Mucosa of descending colon (tissue), 3 donors: ENCODE measurements at regions of chr1 and their contacts with region 1.

Region 1: DNA sequence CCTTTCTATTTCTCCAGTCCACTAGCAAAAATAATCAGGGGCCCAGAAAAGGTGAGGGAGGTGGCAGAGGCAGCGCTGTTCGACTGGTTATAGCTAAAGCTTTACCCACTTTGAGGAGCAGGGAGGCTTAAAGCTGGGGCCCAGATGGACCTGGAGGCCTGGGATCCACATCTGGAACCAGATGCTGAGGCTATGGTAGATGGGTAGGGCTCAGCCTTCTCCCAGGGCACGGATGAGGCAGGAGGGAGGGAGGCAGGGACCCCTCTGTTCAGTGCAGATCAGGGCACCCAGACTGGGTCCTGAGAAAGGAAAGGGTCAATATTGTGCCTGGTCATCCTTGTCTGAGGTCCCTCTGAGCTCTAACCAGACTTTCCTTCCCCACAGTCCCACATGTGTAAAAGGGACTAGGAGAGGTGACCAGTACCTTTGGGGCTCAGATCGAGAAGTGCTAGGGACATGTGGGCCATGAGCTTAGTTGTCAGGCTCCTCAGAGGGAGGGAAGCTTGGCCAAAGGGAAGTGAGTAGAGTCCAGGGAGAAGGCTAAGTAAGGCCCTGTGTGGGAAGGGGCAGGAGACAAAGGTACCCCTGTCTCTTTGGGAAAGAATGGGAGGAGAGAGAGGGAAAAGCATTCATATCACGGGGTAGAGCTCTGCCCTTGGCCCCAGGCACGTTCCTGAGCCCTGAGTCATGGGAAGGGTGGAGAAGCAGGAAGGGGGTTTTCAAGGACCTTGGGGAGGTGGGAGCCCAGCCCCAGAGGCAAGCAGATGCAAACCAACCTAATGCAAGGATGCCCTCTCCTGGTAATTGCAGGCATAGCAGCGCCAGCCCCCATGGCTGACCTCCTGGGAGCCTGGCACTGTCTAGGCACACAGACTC is 15.4 kb downstream of the LMNA start:
- DNase-seq: peak; percentile 86 to 93 (median 87)
- ATAC-seq: peak; percentile 73
- H3K4me3 ChIP-seq: no peak overlapping the region
- H3K4me1 ChIP-seq: peaks cover 53% of the 10 kb centered on the region
- CTCF ChIP-seq: peak; percentile 81

Region 2: GRCh38 chr1:156096640-156097391 is 33.1 kb before region 1 on chr1:
- intact Hi-C with region 1: loop called (anchors 5 kb)
- DNase-seq: peak; percentile 90 to 95 (median 93)
- ATAC-seq: peak; percentile 86
- H3K4me3 ChIP-seq: no peak overlapping the region
- H3K4me1 ChIP-seq: peaks cover 40% of the 10 kb centered on the region
- CTCF ChIP-seq: peak; percentile 95

Region 3: DNA sequence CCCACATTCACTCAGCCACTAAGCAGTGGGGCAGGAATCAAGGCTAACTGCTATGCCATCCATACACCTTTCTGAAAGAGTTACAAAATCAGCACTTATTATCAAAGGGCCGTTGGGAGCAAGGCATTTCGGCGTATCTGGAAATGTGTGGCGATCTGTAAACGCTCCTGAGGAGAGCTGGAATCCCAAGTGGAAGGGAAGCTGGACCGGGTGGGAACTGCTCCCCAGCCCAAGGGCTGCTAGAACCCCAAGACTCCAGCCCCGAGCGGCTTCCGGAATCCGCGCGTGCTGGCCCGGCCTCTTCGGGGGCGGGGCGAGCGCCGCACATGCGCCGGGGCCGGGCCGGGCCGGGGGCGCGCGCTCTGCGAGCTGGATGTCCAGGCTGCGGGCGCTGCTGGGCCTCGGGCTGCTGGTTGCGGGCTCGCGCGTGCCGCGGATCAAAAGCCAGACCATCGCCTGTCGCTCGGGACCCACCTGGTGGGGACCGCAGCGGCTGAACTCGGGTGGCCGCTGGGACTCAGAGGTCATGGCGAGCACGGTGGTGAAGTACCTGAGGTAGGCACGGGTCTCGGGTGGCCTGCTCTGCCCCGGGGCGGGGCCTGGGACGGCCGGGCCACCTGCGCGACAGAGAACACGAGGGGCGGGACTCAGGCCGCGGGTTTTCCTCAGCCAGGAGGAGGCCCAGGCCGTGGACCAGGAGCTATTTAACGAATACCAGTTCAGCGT is 461.7 kb after region 1 on chr1 and contains the start of gene NAXE:
- intact Hi-C with region 1: no loop called
- DNase-seq: peak; percentile 81 to 87 (median 86)
- ATAC-seq: peak; percentile 96
- H3K4me3 ChIP-seq: peak within 1 kb of the TSS; percentile 27
- H3K4me1 ChIP-seq: peaks cover 11% of the 10 kb centered on the region
- CTCF ChIP-seq: no peak
- total RNA-seq, gene NAXE: 70.8 to 94.4 (median 86.5) TPM